T-cell (primary cell): ENCODE measurements at regions of chr15 and their contacts with region 1.

Region 1: DNA sequence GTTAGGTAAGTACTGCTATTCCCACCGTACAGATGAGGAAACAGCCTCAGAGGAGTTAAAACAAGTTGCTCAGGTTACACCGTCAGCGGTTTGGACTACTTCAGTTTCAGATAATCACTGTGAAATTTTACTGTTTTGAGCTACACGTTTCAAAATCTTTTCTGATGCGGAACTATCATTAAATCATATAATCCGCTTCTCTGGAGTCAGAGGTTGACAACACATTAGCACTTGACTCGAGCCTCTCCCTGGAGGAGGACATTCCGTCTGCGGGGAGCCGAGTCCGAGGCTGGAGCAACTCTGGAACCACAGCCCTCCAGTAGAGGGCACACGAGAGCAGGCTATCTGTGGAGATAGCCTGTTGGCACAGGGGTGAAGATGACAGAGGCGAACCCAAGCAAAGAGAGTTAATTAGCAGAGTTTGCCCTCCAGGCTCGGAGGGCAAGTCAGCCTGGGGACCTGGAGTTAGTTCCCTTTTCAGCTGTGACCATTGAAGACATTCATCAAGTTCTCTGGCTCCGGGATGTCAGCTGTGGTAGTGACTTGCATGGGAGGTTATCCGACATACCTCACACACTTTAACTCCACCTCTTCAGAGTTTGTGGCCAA is 131.2 kb downstream of the IGF1R start:
- DNase-seq: peak; percentile 12 to 83 (median 61)
- ATAC-seq: peak; percentile 69 to 81 (median 74)
- H3K4me3 ChIP-seq: no peak overlapping the region
- H3K4me3 Mint-ChIP-seq: peak overlapping the region; percentile 31 to 50 (median 45)
- H3K27ac ChIP-seq: no peak overlapping the region
- H3K27ac Mint-ChIP-seq: no peak overlapping the region
- H3K4me1 ChIP-seq: peaks cover 10 to 27% of the 10 kb centered on the region in 2 experiments
- H3K4me1 Mint-ChIP-seq: peaks cover 43 to 50% (median 43%) of the 10 kb centered on the region in 3 donors
- H3K27me3 ChIP-seq: no peaks in the 10 kb centered on the region
- H3K27me3 Mint-ChIP-seq: no peaks in the 10 kb centered on the region

Region 2: DNA sequence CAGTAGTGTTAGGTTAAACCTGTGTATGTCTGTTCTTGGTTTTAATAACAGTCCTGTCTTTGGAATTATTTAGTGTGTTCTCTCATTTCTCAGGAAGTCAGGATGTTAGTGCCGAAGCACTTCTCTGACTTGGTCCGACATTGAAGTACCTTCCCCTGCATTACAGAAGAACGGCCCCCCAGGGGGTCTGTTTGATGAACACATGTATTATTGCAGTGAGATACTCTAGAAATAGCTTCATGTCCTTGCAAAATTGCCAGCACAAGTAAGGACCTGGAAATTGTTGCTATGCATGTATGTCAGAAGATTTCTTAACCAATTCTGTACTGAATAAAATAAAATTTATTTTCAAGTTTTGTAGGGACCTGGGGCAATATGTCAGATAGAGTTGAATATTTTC is 20.3 kb before region 1 on chr15:
- CTCF ChIA-PET with region 1: no interaction called
- POLR2A ChIA-PET with region 1: no interaction called
- DNase-seq: no peak
- ATAC-seq: no peak
- H3K4me3 ChIP-seq: no peak overlapping the region
- H3K4me3 Mint-ChIP-seq: no peak overlapping the region
- H3K27ac ChIP-seq: no peak overlapping the region
- H3K27ac Mint-ChIP-seq: no peak overlapping the region
- H3K4me1 ChIP-seq: peaks cover 0 to 2% of the 10 kb centered on the region in 2 experiments
- H3K4me1 Mint-ChIP-seq: peaks cover 42 to 59% (median 49%) of the 10 kb centered on the region in 3 donors
- H3K27me3 ChIP-seq: no peaks in the 10 kb centered on the region
- H3K27me3 Mint-ChIP-seq: no peaks in the 10 kb centered on the region

Region 3: GRCh38 chr15:98873441-98874201 is 94.1 kb after region 1 on chr15:
- CTCF ChIA-PET with region 1: no interaction called
- POLR2A ChIA-PET with region 1: interaction called in 1 of 2 experiments, 10 read pairs
- DNase-seq: peak in 1 of 35 experiments; percentile 5
- ATAC-seq: no peak
- H3K4me3 ChIP-seq: no peak overlapping the region
- H3K4me3 Mint-ChIP-seq: peak overlapping the region in 1 of 3 donors; percentile 7
- H3K27ac ChIP-seq: no peak overlapping the region
- H3K27ac Mint-ChIP-seq: no peak overlapping the region
- H3K4me1 ChIP-seq: peaks cover 0 to 5% of the 10 kb centered on the region in 2 experiments
- H3K4me1 Mint-ChIP-seq: peaks cover 40 to 64% (median 45%) of the 10 kb centered on the region in 3 donors
- H3K27me3 ChIP-seq: no peaks in the 10 kb centered on the region
- H3K27me3 Mint-ChIP-seq: peaks cover 0 to 6% of the 10 kb centered on the region in 2 donors

Region 4: DNA sequence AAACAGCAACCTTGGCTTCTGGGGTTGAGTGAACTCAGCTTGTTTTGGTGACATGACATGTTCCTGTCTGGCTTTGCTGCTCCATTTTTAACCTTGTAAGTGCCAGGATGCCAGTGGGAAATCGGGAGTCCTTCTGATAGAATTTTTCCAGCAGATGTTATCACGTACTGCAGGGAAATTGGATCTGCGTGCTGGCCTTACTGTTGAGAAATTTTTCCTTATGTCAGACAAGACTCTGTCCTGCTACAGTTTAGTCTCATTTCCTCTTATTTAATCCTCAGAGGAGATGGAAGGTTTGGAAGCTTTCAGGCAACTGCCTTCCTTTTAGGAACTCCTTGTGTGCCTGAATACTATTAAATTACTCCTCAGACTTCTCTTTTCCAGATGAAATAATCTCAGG is 147.5 kb after region 1 on chr15:
- CTCF ChIA-PET with region 1: no interaction called
- POLR2A ChIA-PET with region 1: no interaction called
- DNase-seq: no peak
- ATAC-seq: no peak
- H3K4me3 ChIP-seq: no peak overlapping the region
- H3K4me3 Mint-ChIP-seq: no peak overlapping the region
- H3K27ac ChIP-seq: no peak overlapping the region
- H3K27ac Mint-ChIP-seq: no peak overlapping the region
- H3K4me1 ChIP-seq: no peaks in the 10 kb centered on the region
- H3K4me1 Mint-ChIP-seq: no peaks in the 10 kb centered on the region
- H3K27me3 ChIP-seq: no peaks in the 10 kb centered on the region
- H3K27me3 Mint-ChIP-seq: no peaks in the 10 kb centered on the region